Head of caudate nucleus (tissue), 42 donors: ENCODE measurements at regions of chr19 and their contacts with region 1.

Region 1: GRCh38 chr19:35716801-35717666 is 769 bp upstream of the KMT2B start:
- DNase-seq: peak; percentile 81 to 98 (median 95)

Region 2: DNA sequence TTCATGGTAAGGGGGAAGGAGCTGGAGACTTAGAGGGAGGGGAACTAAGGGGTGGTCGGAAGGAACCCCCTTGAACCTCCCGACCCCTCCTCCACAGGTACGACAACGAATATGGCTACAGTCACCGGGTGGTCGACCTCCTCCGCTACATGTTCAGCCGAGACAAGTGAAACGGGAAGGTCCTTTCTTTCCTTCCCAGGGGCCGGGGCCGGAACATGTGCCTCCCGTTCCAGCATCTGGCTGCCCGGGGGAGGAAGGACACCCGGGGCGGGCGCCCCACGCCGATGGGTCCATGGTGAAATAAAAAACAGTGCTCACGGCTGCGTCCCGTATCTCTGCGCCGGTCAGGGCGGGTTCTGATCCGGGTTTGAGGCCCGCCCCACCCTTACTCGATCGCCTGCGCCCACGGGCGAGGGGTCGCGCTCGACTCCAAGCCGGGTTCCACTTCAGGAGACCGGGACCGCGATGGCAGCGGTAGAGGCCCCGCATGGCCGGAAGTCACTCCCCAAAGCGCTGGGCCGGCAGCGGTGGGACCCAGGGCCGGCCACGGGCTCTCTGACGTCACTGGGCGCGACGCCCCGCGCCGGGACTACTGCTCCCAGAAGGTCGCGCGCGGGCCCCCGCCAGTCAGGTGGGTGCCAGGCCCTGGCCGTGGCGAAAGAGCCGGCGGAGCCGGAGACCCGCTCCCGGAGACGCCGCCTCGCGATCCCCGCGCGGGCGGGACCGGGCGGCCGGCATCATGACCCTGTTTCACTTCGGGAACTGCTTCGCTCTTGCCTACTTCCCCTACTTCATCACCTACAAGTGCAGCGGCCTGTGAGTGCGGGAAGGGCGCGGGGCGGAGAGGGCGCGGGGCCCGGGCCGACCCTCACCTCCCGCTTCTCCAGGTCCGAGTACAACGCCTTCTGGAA is 171.8 kb before region 1 on chr19 and contains the start of gene TMEM147:
- intact Hi-C with region 1: loop called (anchors 5 kb)
- DNase-seq: peak; percentile 76 to 97 (median 94)

Region 3: GRCh38 chr19:35628565-35629331 is 88.3 kb before region 1 on chr19 and contains the start of gene RBM42:
- intact Hi-C with region 1: loop called (anchors 2 kb)
- DNase-seq: peak; percentile 91 to 98 (median 96)

Region 4: GRCh38 chr19:35666246-35666913 is 50.7 kb before region 1 on chr19 and contains the start of gene UPK1A:
- intact Hi-C with region 1: no loop called
- DNase-seq: no peak

Region 5: GRCh38 chr19:35693830-35694599 is 23.0 kb before region 1 on chr19:
- intact Hi-C with region 1: loop called (anchors 1 kb)
- DNase-seq: peak; percentile 72 to 95 (median 89)

Region 6: DNA sequence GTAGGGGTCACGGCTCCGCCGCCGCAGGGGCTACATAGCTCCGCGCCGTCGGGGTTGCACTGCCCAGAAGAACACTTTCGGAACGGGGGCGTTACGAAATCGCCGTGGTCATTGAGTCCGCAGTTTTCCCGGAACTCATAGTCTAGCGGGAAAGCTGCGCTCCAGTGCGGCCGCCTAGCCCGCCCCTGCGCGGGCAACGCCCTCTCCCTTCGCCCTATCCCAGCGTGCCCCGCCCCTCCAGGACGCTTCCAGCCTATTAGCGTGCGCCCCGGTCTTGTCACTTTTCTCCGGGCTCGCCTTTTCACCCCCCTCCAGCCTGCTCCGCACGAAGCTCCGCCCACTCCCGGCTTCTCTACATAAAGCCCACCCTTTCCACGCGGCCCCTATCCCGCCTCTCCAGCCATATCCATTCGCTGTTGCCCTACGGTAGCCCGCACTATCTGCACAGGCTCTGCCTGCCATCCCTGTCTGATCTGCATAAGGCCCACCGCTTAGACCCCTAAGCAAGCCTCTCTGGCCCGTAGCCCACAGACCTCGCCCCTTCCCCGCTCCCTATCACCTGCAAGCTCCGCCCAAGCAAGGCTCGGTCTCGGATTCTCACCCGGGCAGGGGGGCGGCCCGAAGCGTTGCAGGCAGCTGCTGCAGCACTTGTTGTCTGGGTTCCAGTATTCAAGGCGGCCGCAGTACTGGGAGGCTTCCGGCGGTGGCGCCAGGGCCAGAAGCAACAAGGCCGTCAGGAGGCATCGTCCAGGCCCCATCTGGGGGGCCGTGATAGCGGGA is 23.6 kb after region 1 on chr19:
- intact Hi-C with region 1: loop called (anchors 2 kb)
- DNase-seq: peak; percentile 97 to 100 (median 99)

Region 7: GRCh38 chr19:35921012-35921411 is 204.0 kb after region 1 on chr19:
- intact Hi-C with region 1: no loop called
- DNase-seq: no peak

Region 8: GRCh38 chr19:35931161-35931873 is 214.3 kb after region 1 on chr19:
- intact Hi-C with region 1: no loop called
- DNase-seq: peak; percentile 97 to 100 (median 99)